HEK293 (cell line): ENCODE measurements at regions of chr4 and their contacts with region 1.

Region 1: DNA sequence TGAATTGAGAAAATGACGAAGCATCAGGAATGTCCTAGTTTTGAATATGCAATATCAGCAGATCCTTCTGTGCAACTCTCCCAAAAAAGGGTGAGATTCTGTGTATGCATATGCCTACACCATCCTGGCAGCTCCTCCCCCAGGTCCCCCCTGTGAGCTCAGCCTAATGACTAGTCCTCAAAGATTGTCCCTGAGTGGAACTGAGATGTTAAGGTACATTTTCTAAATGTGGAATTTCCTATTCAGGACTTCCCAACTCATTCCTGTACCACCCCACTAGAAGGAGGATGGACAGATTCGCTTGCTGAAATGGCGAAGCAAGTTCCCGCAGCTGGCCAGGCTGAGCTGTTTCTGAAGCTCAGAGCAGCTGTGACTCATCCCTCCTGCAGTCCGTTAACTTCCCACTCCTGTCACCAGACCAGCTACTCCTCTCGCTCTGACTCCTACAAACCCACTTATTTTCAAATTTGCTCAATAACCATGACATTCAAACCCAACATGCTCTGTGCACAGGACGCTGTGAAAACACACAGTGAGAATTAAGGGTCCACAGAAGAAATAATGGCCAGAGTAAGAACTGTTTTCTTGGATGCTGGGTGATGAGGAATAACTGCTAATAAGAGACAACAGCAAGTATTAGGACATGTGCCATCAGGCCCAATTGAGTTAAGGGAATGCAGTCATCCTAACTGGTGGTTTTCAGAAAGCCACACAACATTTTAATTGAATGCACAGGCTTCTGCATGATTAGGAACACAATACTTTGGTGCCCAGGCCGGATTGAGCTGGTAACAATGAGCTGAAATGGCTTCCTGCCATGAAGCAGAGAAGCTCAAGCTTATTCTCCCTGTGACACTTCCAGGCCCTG is 40.0 kb upstream of the IRF2 start:
- H3K4me3 ChIP-seq: no peak overlapping the region
- H3K27ac ChIP-seq: no peak overlapping the region
- H3K4me1 ChIP-seq: no peaks in the 10 kb centered on the region
- CTCF ChIP-seq: no peak

Region 2: DNA sequence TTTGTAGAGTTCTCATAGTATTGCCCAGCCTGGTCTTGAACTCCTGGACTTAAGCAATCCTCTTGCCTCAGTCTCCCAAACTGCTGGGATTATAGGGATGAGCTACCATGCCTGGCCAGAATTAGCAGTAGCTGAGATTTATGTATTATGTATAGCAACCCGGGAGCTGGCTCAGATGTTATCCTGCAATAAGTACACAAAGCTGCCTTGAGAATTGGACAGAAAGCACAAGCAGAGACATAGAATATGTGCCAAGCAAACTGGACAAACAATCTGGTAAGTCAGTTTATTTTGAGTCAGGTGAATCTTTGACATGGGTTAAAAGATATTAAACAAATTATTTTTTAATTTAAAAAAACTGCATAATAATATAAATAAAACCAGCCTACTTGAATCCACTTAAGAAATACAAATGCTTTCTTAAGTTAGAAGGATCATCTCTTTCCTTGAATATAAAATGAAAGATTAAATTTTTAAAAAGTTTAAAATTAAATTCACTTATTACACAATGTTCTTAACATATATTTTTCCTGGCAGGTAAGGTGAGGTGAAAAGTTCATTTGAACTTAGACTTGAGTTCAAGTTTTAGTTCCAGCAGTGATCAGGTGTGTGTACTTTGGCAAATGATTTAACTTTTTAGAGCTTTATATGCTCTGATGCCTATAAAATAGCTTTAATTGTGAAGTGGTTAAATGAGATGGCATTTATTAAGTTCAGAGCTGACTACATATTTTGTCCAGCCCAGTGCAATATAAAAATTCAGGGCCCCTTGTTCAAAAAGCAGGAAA is 399.2 kb after region 1 on chr4:
- CTCF ChIA-PET with region 1: interaction called, 10 read pairs
- POLR2A ChIA-PET with region 1: no interaction called
- H3K4me3 ChIP-seq: no peak overlapping the region
- H3K27ac ChIP-seq: no peak overlapping the region
- H3K4me1 ChIP-seq: no peaks in the 10 kb centered on the region
- CTCF ChIP-seq: no peak